Activated CD4-positive, alpha-beta T cell treated with anti-CD3 and anti-CD28 coated beads for 36 hours (primary cell): ENCODE measurements at regions of chr1 and their contacts with region 1.

Region 1: DNA sequence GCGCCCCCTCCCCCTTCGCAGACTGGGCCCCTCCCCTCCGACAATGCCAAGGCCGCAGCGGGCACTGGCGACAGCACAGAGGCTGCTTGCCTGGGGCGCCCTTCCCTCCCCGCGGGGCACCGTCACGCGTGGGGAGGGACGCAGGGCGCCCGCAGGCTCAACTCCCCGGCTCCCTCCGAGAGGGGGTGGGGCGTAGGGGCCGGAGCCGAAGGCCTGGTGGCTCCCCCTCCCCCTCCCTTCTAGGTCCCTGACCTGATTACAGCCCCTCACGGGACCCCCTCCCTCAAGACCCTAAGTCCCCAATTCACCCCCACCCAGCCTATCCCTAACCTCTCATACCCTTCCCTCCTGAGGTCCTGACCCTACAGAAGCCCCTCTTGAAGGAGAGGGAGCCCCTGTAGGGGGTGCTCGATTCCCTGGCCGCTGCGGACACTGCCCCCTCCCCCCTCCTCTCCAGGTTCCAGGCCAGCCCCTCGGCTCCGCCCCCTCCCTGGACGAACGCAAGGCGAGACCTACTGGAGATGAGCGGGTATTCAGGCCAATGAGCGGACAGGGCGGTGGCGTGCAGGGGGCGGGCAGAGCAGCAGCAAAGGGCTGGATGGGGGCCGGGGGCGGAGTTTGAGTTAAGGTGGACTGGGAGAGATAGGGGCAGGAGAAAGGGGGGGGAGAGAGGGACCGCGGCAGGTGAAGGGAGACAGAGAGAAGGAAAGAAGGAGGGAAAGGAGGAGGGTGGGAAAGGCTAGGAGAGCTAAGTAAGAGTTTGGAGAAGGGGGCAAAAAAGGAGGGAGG is 733 bp upstream of the ZBTB7B start:
- DNase-seq: peak; percentile 100
- ATAC-seq: peak; percentile 67
- H3K4me3 Mint-ChIP-seq: peak overlapping the region; percentile 96
- H3K27ac Mint-ChIP-seq: peak overlapping the region; percentile 94
- H3K4me1 Mint-ChIP-seq: peaks cover 54% of the 10 kb centered on the region
- H3K27me3 Mint-ChIP-seq: no peaks in the 10 kb centered on the region

Region 2: DNA sequence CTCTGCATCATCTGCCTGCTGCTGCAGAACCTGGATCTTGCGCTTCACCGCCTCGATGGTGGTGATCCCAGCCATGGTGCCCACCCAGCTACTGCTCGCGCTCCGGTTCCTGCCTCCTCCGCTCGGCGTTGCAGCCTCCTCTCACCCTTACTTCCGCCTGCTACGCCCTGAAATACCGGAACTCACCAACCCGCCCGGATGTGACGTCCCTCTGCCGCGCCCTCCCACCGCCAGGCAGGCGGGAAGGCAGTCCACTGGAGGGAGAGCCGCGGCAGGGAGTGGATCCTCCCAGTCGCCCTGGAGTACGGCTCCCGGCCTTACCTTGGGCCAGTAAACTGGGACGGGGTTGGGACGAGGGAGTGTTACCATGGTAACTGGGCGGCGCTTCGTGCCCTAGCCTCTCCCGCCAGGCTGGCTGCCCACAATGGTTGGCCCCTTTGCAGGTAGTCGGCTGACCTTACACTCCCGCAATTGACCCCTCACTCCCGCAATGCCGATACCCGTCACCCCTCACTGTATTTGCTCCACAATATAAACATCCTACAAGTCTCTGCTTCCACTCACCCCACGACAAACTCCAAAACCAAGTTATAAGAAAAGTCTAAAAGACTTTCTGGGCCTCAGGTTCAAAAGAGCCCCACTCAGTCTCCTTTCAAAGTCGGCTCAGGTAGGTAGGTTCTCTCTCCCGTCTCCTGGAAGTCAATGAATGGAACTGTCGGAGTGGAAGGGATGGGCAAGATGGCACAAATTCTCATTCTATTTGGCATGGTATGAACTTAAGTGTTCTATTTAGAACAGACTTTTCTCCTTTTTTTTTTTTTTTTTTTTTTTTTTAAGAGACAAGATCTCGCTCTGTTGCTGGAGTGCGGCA is 818.6 kb before region 1 on chr1:
- CTCF ChIA-PET with region 1: no interaction called
- POLR2A ChIA-PET with region 1: no interaction called
- intact Hi-C with region 1: loop called in 1 of 2 experiments (anchors 1 kb)
- DNase-seq: peak; percentile 98
- ATAC-seq: peak; percentile 72
- H3K4me3 Mint-ChIP-seq: peak overlapping the region; percentile 99
- H3K27ac Mint-ChIP-seq: peak overlapping the region; percentile 100
- H3K4me1 Mint-ChIP-seq: peaks cover 39% of the 10 kb centered on the region
- H3K27me3 Mint-ChIP-seq: no peaks in the 10 kb centered on the region

Region 3: GRCh38 chr1:154198756-154199562 is 802.9 kb before region 1 on chr1:
- CTCF ChIA-PET with region 1: no interaction called
- POLR2A ChIA-PET with region 1: no interaction called
- intact Hi-C with region 1: no loop called
- DNase-seq: peak; percentile 62
- ATAC-seq: peak; percentile 77
- H3K4me3 Mint-ChIP-seq: no peak overlapping the region
- H3K27ac Mint-ChIP-seq: no peak overlapping the region
- H3K4me1 Mint-ChIP-seq: no peaks in the 10 kb centered on the region
- H3K27me3 Mint-ChIP-seq: peaks cover 3% of the 10 kb centered on the region

Region 4: DNA sequence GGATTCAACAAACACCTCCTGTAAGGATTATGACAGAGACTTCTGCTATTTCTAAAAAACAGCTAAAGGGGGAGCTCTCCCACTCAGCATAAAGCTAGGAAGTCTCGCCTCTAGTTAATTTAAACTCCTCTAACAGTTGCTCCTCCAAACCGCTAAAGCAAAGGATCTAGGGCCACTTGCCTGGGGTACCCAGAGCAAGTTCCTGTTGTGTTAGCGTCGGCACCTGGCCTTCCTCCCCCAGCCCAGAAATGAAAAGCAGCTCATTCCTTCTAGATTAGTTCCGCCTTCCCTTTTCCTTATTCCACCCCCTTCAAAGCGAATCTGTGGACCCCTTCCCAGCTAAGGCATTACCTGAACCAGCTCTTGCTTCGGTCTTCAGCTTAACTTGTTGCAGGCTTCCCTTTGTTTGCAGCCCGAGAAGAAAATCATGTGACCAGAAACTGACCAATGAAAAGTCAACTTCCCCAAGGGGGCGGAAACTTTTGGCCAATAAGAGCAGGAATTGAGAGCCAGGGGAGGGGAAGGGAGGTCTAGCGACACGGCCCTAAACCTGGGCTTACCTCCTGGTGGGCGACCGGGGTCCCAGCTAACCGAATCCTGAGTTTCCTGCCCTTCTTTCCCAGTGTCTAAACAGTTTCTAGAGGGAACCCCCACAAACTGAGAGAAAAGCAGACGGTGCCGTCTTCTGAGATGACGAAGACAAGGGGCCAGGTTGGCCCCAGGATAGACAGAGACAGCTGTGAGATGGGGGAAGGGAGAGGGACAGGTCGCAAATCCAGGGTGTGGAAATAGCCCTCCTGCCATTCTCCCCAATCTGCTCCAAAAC is 45.9 kb before region 1 on chr1 and contains the start of gene PBXIP1:
- CTCF ChIA-PET with region 1: interaction called, 21 read pairs
- POLR2A ChIA-PET with region 1: interaction called, 3 read pairs
- intact Hi-C with region 1: loop called in 1 of 2 experiments (anchors 1 kb)
- DNase-seq: peak; percentile 83
- ATAC-seq: peak; percentile 54
- H3K4me3 Mint-ChIP-seq: peak within 1 kb of the TSS; percentile 85
- H3K27ac Mint-ChIP-seq: peak within 1 kb of the TSS; percentile 95
- H3K4me1 Mint-ChIP-seq: peaks cover 82% of the 10 kb centered on the region
- H3K27me3 Mint-ChIP-seq: no peaks in the 10 kb centered on the region
- total RNA-seq, gene PBXIP1: 22.6 to 28.1 TPM

Region 5: GRCh38 chr1:155017041-155017945 is 15.4 kb after region 1 on chr1:
- CTCF ChIA-PET with region 1: interaction called, 86 read pairs
- POLR2A ChIA-PET with region 1: interaction called, 7 read pairs
- intact Hi-C with region 1: loop called (anchors 1 kb)
- DNase-seq: peak; percentile 97
- ATAC-seq: peak; percentile 87
- H3K4me3 Mint-ChIP-seq: peak overlapping the region; percentile 53
- H3K27ac Mint-ChIP-seq: peak overlapping the region; percentile 69
- H3K4me1 Mint-ChIP-seq: peaks cover 69% of the 10 kb centered on the region
- H3K27me3 Mint-ChIP-seq: no peaks in the 10 kb centered on the region

Region 6: DNA sequence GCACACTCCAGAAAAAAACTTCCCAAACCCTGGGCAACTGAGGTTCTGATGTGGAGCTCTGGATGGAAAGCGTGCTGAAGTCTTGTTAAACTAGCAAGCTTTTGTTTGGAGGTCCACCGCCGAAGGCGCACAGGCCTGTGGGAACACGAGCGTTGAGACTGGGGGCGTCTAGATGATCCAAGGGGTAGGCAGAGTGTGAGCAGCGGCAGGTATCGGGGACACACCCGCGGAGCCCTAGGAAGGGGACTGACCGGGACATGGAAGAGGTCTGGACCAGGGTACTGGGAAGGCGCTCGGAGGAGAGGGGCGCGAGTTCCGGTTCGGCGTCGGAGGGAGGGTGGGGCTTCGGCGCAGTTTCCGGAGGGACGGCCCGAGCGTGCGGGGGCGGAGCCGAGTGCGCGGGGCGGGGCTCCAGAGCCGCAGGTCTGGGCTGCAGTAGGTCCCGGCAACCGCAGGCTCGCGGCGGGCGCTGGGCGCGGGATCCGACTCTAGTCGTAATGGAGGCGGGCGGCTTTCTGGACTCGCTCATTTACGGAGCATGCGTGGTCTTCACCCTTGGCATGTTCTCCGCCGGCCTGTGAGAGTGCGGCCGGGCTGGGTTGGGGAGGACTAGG is 133.7 kb after region 1 on chr1 and contains the start of gene SLC50A1:
- CTCF ChIA-PET with region 1: interaction called, 3 read pairs
- POLR2A ChIA-PET with region 1: interaction called, 3 read pairs
- intact Hi-C with region 1: loop called in 1 of 2 experiments (anchors 1 kb)
- DNase-seq: peak; percentile 97
- ATAC-seq: peak; percentile 78
- H3K4me3 Mint-ChIP-seq: peak within 1 kb of the TSS; percentile 96
- H3K27ac Mint-ChIP-seq: peak within 1 kb of the TSS; percentile 97
- H3K4me1 Mint-ChIP-seq: peaks cover 35% of the 10 kb centered on the region
- H3K27me3 Mint-ChIP-seq: no peaks in the 10 kb centered on the region
- total RNA-seq, gene SLC50A1: 50.2 to 58.0 TPM

Region 7: DNA sequence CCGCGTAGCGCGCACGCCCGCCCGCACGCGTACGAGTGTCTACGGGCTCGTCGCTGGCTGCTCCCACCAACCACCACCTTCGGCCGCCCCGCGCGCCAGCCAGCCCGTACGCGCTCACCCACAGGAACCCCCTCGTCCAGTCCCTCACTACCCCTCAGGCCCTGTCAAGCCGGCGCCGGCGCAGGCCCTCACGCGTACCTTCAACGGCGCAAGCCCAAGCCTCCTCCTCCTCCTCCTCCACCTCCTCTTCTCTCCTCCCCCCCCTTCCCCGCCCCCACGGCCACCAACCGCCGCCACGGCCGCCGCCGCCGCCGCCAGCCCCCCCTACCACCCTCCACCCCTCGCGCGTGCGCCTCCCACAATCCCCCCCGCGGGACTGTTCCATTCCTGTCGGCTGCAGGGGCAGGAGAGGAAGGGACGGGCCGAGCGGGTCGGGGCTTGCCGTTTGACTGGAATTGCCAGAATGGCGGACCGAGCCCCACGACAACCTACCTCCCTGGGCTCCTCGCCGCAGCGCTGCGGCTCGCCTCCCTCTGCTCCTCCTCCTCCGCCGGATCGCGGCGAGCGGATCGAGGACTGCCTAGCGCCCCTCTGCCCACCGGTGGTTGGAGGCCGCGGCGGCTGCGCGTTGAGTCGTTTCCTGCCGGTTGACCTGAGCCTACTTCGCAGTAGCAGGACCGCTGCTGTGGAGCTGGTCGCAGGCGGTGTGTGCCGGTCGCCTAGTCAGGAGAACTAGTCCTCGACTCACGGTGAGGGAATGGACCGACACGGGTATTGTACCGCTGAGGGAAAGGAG is 560.9 kb after region 1 on chr1 and contains the start of gene ASH1L:
- CTCF ChIA-PET with region 1: no interaction called
- POLR2A ChIA-PET with region 1: no interaction called
- intact Hi-C with region 1: loop called in 1 of 2 experiments (anchors 5 kb)
- DNase-seq: peak; percentile 96
- ATAC-seq: peak; percentile 83
- H3K4me3 Mint-ChIP-seq: peak within 1 kb of the TSS; percentile 90
- H3K27ac Mint-ChIP-seq: peak within 1 kb of the TSS; percentile 99
- H3K4me1 Mint-ChIP-seq: peaks cover 46% of the 10 kb centered on the region
- H3K27me3 Mint-ChIP-seq: no peaks in the 10 kb centered on the region
- total RNA-seq, gene ASH1L: 28.1 to 31.4 TPM